ENCODE measurements at regions of chr12 and their contacts with region 1.

Region 1: GRCh38 chr12:104108755-104109445 is 29.1 kb downstream of the NFYB start:
- DNase-seq: peak; percentile 68 to 89
- ATAC-seq: peak; percentile 88

Region 2: DNA sequence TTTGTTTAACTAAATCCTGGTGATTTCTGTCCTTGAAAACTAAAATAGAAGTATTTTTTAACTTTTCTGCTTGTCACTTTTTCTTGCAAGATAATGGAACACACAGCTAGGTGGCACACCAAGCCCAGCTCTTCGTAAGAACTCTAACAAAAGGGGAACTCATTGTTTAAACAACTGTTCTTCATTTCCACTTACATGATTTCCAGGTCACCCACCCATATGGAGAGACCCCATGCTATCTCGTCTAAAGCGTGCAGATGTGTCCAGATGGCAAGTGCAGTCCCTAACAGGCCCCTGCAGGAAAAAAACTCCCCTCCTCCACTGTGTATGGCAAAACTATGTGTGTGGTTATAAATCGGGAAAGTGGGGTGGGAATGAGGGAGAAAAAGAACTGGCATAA is 224.6 kb before region 1 on chr12:
- intact Hi-C with region 1: loop called in 1 of 2 experiments (anchors 10 kb)
- DNase-seq: peak in 1 of 2 donors; percentile 22
- ATAC-seq: no peak

Region 3: GRCh38 chr12:103956516-103957027 is 152.3 kb before region 1 on chr12:
- intact Hi-C with region 1: loop called in 1 of 2 experiments (anchors 10 kb)
- DNase-seq: peak in 1 of 2 donors; percentile 53
- ATAC-seq: peak; percentile 56

Measured in left colon (tissue), 2 donors.